ENCODE measurements at regions of chr16 and their contacts with region 1.

Region 1: DNA sequence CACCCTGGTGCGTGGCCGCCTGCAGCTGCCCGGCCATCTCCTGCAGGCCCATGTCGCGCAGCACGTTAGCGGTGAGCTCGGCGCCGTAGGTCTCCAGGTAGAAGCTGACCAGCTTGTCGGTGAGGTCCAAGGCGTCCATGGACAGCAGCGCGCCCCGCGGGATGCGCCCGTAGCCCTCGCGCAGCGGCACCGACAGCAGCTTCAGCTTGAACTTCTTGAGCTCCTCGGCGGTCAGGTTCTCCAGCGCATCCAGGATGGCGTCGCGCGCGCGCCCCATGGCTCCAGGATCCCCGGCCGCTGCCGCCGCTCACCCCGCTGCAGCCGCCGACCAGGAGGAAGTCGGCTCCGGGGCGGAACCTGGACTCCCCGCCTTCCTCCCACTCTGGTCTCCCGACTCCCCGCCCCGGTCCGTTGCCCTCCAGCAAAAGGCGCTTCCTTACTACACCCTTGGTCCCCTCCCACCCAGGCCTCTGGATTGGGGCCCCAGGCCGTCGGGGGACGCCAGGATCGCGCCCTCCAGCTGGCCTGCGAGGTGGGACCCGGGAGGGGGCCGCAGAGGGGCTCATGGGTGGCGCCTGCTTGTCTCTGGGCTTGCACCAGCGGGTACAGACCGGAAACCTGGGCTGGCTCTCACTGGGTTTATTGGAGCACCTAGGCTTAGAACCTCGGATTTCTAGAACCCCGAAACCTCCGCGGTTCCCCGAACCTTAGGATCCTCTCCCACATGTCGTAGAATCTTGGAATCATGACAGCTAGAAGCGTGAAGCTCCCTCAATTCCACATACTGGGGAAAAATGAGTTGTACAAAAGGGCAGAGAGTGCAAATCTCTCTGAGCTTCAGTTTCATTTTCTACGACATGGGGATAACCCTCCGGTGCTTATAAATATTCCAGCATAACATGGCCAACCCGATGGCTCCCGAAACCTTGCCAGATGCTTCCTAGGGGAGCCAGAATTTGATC is at the start of gene PYCARD:
- DNase-seq: peak; percentile 43 to 60
- ATAC-seq: peak; percentile 37 to 59 (median 55)
- H3K4me3 ChIP-seq: peak within 1 kb of the TSS; percentile 67
- H3K4me3 Mint-ChIP-seq: peak within 1 kb of the TSS; percentile 91
- H3K27ac ChIP-seq: peak within 1 kb of the TSS; percentile 67
- H3K27ac Mint-ChIP-seq: peak within 1 kb of the TSS; percentile 87 to 89
- H3K4me1 ChIP-seq: peaks cover 41% of the 10 kb centered on the region
- H3K4me1 Mint-ChIP-seq: peaks cover 45 to 63% of the 10 kb centered on the region in 2 donors
- H3K27me3 ChIP-seq: no peaks in the 10 kb centered on the region
- H3K27me3 Mint-ChIP-seq: no peaks in the 10 kb centered on the region
- CTCF ChIP-seq: no peak
- total RNA-seq, gene PYCARD: 29.7 to 38.1 (median 37.6) TPM

Region 2: GRCh38 chr16:31010585-31011325 is 191.9 kb before region 1 on chr16 and contains the start of gene STX1B:
- intact Hi-C with region 1: no loop called
- DNase-seq: peak in 1 of 2 donors; percentile 70
- ATAC-seq: peak in 2 of 3 donors; percentile 54 to 59
- H3K4me3 ChIP-seq: no peak within 1 kb of the TSS
- H3K4me3 Mint-ChIP-seq: peak within 1 kb of the TSS; percentile 74
- H3K27ac ChIP-seq: no peak within 1 kb of the TSS
- H3K27ac Mint-ChIP-seq: no peak within 1 kb of the TSS
- H3K4me1 ChIP-seq: peaks cover 7% of the 10 kb centered on the region
- H3K4me1 Mint-ChIP-seq: peaks cover 0 to 20% of the 10 kb centered on the region in 2 donors
- H3K27me3 ChIP-seq: peaks cover 17% of the 10 kb centered on the region
- H3K27me3 Mint-ChIP-seq: peaks cover 32 to 52% of the 10 kb centered on the region in 2 donors
- CTCF ChIP-seq: no peak
- total RNA-seq, gene STX1B: 0.14 to 1.6 (median 0.32) TPM

Region 3: DNA sequence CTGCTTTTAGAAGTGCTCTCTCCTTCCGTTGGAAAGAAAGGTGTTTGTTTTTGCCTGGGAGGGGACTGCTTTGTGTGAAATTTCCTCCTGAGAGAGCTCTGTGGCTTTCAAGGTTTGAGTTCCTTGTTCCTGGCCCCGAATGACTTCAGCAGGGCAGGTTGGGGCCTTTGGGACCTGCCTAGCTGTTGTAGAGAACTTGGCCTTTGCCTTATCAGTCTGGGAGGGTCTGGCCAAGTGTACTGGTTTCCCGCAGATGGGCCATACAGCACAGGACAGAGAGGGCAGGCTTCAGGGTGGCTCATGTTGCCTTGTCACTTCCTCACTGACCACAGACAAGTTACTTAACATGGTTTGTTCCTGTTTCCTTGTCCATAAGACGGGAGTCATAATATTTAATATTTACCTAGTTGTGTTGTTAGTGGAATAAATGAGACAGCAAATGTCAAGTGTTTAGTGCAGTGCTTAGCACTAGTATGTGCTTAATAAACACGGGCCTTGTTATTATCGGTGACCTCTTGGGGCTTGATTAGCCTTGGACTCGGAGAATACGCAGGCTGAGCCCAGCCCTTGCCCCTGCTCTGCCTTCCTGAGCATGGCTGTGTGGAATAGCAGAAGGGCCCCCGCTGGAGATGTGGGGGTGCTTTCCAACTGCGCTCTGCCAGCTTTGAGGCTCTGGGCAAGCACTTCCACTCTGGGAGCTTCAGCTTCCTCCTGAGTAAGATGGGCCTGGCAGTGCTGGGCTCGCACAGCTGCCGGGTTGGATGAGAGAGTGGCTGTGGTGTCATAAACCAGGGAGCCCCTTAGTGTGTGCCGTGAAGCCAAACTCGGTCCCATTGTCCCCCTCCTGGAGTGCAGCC is 73.8 kb before region 1 on chr16:
- intact Hi-C with region 1: no loop called
- DNase-seq: no peak
- ATAC-seq: peak; percentile 64 to 94 (median 66)
- H3K4me3 ChIP-seq: no peak overlapping the region
- H3K4me3 Mint-ChIP-seq: no peak overlapping the region
- H3K27ac ChIP-seq: peak overlapping the region; percentile 74
- H3K27ac Mint-ChIP-seq: peak overlapping the region; percentile 31 to 64
- H3K4me1 ChIP-seq: peaks cover 41% of the 10 kb centered on the region
- H3K4me1 Mint-ChIP-seq: peaks cover 0 to 8% of the 10 kb centered on the region in 2 donors
- H3K27me3 ChIP-seq: no peaks in the 10 kb centered on the region
- H3K27me3 Mint-ChIP-seq: no peaks in the 10 kb centered on the region
- CTCF ChIP-seq: no peak

Region 4: DNA sequence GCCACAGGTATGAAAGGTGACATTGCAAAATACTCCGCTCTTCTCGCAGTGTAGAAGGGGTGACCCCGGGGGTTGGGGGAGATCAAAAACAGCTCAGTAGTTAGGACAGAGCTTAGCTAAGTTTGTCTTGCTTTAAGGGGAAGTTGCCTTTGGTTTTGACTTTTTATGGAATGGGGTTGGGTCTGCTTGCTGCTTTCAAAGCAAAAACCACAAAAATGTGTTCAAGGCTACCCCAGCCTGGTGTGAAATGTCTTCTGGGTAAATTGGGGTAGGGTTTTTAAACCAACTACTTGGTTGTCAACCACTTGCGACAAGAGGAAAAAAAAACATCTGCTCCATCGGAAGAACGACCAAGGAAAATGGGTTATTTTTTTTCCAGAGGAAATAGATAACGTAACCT is 16.5 kb before region 1 on chr16:
- intact Hi-C with region 1: loop called (anchors 2 kb)
- DNase-seq: peak in 1 of 2 donors; percentile 41
- ATAC-seq: no peak
- H3K4me3 ChIP-seq: no peak overlapping the region
- H3K4me3 Mint-ChIP-seq: peak overlapping the region; percentile 91
- H3K27ac ChIP-seq: no peak overlapping the region
- H3K27ac Mint-ChIP-seq: peak overlapping the region; percentile 80 to 94
- H3K4me1 ChIP-seq: peaks cover 73% of the 10 kb centered on the region
- H3K4me1 Mint-ChIP-seq: peaks cover 97 to 99% of the 10 kb centered on the region in 2 donors
- H3K27me3 ChIP-seq: no peaks in the 10 kb centered on the region
- H3K27me3 Mint-ChIP-seq: no peaks in the 10 kb centered on the region
- CTCF ChIP-seq: no peak

Region 5: DNA sequence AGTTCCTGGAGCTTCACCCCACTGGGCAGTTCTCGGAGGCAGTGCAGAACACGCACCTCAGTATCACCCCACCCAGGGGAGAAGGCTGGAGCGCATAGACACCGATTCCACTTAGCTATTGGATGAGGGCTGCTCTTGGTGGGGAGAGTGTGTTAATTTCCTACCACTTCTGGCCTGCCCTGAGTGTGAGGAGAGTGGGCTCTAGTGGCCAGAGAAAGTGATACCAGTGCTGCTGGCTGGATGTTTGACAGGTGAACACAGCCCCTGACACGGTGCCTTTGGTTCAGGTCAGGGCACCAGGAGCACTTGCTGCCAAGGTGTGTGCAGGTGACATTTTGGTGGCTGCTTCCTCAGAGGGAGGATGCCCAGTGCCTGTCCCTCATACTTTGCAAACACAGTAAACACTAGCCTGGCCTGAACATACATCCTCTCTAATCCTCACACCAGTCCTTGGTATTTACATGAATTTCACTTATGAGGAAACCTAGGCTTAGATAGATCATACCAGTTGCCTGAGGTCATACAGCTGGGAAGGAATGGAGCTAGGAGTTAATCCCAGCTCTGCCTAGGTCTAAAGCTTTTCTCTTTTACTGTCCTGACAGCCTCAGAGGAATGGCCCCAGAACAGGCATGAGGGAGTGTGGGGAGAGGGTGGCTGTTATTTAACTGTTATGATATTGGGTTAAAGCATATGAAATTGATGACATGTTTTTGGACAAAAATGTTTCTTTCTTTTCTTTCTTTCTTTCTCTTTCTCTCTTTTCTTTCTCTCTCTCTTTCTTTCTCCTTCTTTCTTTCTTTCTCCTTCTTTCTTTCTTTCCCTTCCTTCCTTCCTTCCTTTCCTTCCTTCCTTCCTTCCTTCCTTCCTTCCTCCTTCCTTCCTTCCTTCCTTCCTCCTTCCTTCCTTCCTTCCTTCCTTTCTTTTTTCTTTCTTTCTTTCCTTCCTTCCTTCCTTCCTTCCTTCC is 131.3 kb after region 1 on chr16:
- intact Hi-C with region 1: loop called (anchors 5 kb)
- DNase-seq: peak in 1 of 2 donors; percentile 58
- ATAC-seq: peak; percentile 81 to 88 (median 84)
- H3K4me3 ChIP-seq: no peak overlapping the region
- H3K4me3 Mint-ChIP-seq: no peak overlapping the region
- H3K27ac ChIP-seq: no peak overlapping the region
- H3K27ac Mint-ChIP-seq: peak overlapping the region; percentile 53 to 79
- H3K4me1 ChIP-seq: peaks cover 21% of the 10 kb centered on the region
- H3K4me1 Mint-ChIP-seq: peaks cover 37 to 39% of the 10 kb centered on the region in 2 donors
- H3K27me3 ChIP-seq: no peaks in the 10 kb centered on the region
- H3K27me3 Mint-ChIP-seq: peaks cover 4 to 6% of the 10 kb centered on the region in 2 donors
- CTCF ChIP-seq: peak; percentile 21

Region 6: GRCh38 chr16:31382485-31383161 is 179.9 kb after region 1 on chr16:
- intact Hi-C with region 1: loop called (anchors 5 kb)
- DNase-seq: peak; percentile 68 to 80
- ATAC-seq: peak; percentile 65 to 85 (median 71)
- H3K4me3 ChIP-seq: no peak overlapping the region
- H3K4me3 Mint-ChIP-seq: peak overlapping the region; percentile 25
- H3K27ac ChIP-seq: no peak overlapping the region
- H3K27ac Mint-ChIP-seq: no peak overlapping the region
- H3K4me1 ChIP-seq: peaks cover 37% of the 10 kb centered on the region
- H3K4me1 Mint-ChIP-seq: peaks cover 23 to 28% of the 10 kb centered on the region in 2 donors
- H3K27me3 ChIP-seq: no peaks in the 10 kb centered on the region
- H3K27me3 Mint-ChIP-seq: peaks cover 0 to 6% of the 10 kb centered on the region in 2 donors
- CTCF ChIP-seq: peak; percentile 90